Common myeloid progenitor, CD34-positive (primary cell): ENCODE measurements at regions of chr10 and their contacts with region 1.

Region 1: DNA sequence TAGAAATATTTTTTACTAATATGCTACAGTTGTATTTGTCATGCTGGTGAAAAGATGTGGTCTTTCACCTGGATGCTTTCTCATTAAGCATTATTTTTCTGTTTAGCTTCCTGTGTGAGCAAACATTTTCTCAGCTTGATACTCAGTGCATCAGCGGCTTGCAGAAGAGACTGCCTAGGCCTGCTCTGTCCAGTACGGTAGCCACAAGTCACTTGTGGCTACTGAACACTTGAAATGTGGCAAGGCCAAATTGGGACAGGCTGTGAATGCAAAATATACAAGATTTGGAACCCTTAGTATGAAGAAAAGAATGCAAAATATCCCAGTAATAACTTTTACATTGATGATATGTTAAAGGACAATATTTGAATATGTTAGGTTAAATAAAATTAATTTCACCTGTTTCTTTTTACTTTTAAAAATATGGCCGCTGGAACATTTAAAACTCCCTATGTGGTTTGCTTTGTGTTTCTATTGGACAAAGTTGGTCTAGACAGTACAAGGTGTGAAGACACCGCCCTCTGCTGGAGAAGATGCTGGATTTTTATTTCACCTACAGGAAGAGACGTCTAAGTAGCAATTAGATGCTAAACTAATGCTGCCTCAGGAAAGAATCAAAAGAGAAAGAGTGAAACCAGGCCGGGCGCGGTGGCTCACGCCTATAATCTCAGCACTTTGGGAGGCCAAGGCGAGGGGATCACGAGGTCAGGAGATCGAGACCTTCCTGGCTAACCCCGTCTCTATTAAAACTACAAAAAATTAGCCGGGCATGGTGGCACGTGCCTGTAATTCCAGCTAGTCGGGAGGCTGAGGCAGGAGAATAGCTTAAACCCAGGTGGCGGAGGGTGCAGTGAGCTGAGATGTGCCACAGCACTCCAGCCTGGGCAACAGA is 5.3 kb downstream of the SRGN start:
- DNase-seq: peak; percentile 91 to 96 (median 94)
- H3K4me3 ChIP-seq: peak overlapping the region in 1 of 7 experiments; percentile 47
- H3K27ac ChIP-seq: peak overlapping the region in 1 of 2 experiments; percentile 35
- H3K4me1 ChIP-seq: peaks cover 21 to 46% (median 33%) of the 10 kb centered on the region in 4 experiments
- H3K27me3 ChIP-seq: no peaks in the 10 kb centered on the region

Region 2: GRCh38 chr10:69014171-69014570 is 79.0 kb before region 1 on chr10:
- CTCF ChIA-PET with region 1: interaction called, 14 read pairs
- POLR2A ChIA-PET with region 1: no interaction called
- DNase-seq: no peak
- H3K4me3 ChIP-seq: no peak overlapping the region
- H3K27ac ChIP-seq: no peak overlapping the region
- H3K4me1 ChIP-seq: peaks cover 0 to 3% (median 0%) of the 10 kb centered on the region in 4 experiments
- H3K27me3 ChIP-seq: no peaks in the 10 kb centered on the region

Region 3: DNA sequence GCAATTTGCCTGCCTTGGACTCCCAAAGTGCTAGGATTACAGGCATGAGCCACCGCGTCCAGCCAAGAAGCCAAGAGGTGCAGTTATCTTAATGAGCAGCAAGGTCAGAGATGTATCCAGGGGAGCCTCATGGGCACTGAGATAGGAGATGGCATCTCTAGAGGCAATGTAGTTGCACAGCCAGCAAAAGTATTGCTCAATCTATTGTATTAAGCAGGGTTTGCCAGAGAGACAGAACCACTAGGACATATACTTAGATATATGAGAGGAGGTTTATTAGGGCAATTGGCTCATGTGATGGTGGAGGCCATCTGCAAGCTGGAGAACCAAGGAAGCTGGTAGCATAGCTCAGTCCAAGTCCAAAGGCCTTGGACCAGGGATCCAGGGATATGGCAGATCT is 14.5 kb after region 1 on chr10:
- CTCF ChIA-PET with region 1: interaction called, 10 read pairs
- POLR2A ChIA-PET with region 1: no interaction called
- DNase-seq: no peak
- H3K4me3 ChIP-seq: no peak overlapping the region
- H3K27ac ChIP-seq: no peak overlapping the region
- H3K4me1 ChIP-seq: no peaks in the 10 kb centered on the region
- H3K27me3 ChIP-seq: no peaks in the 10 kb centered on the region